PC-9 (cell line): ENCODE measurements at regions of chr5 and their contacts with region 1.

Region 1: GRCh38 chr5:134845852-134846640 is at the start of gene C5orf24:
- DNase-seq: peak; percentile 79 to 89
- H3K4me3 ChIP-seq: peak within 1 kb of the TSS; percentile 74
- H3K27ac ChIP-seq: peak within 1 kb of the TSS; percentile 68
- H3K4me1 ChIP-seq: peaks cover 35% of the 10 kb centered on the region
- H3K27me3 ChIP-seq: no peaks in the 10 kb centered on the region
- CTCF ChIP-seq: no peak
- total RNA-seq, gene C5orf24: 16.4 and 29.2 TPM in 2 replicates

Region 2: GRCh38 chr5:134833340-134834032 is 12.6 kb before region 1 on chr5:
- CTCF ChIA-PET with region 1: interaction called, 3 read pairs
- POLR2A ChIA-PET with region 1: interaction called, 17 read pairs
- intact Hi-C with region 1: no loop called
- DNase-seq: no peak
- H3K4me3 ChIP-seq: no peak overlapping the region
- H3K27ac ChIP-seq: no peak overlapping the region
- H3K4me1 ChIP-seq: no peaks in the 10 kb centered on the region
- H3K27me3 ChIP-seq: no peaks in the 10 kb centered on the region
- CTCF ChIP-seq: no peak

Region 3: GRCh38 chr5:134873987-134874830 is 28.2 kb after region 1 on chr5 and contains the start of gene TXNDC15:
- CTCF ChIA-PET with region 1: no interaction called
- POLR2A ChIA-PET with region 1: no interaction called
- intact Hi-C with region 1: loop called (anchors 1 kb)
- DNase-seq: peak; percentile 62 to 80
- H3K4me3 ChIP-seq: peak within 1 kb of the TSS; percentile 85
- H3K27ac ChIP-seq: peak within 1 kb of the TSS; percentile 42
- H3K4me1 ChIP-seq: 0 out of 2 replicates have a peak, but pooled peaks cover 8% of the 10 kb centered on the region
- H3K27me3 ChIP-seq: no peaks in the 10 kb centered on the region
- CTCF ChIP-seq: no peak
- total RNA-seq, gene TXNDC15: 18.0 and 19.5 TPM in 2 replicates